ENCODE measurements at regions of chr21 and their contacts with region 1.

Region 1: DNA sequence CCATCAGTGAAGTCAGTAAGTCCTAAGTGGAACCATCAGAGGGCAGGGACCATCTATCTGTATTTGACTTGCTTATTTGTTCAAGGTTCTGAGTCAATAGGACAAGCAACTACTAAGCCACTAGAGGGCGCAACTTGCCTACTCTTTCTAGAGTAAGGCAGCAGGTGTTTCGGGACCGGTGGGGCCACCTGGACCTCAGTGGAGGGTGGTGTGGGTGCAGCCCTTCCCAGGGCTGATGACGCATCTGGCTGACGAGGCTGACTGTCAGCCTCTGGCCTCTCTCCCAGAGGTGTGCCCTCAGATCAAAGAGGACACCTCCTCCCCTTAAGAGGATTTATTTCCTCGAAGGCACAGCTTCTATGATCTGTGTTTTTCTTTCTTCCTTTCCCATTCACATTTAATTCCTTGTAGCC is 6.6 kb downstream of the CBR3 start:
- DNase-seq: peak; percentile 95
- H3K4me3 ChIP-seq: no peak overlapping the region
- H3K27ac ChIP-seq: peak overlapping the region; percentile 75 to 86 (median 81)
- H3K4me1 ChIP-seq: peaks cover 3 to 21% (median 9%) of the 10 kb centered on the region in 4 donors
- H3K27me3 ChIP-seq: no peaks in the 10 kb centered on the region
- CTCF ChIP-seq: peak; percentile 78 to 96 (median 88)
- EP300 ChIP-seq: no peak
- POLR2A ChIP-seq: peak; percentile 19

Region 2: GRCh38 chr21:35861661-35862060 is 279.9 kb before region 1 on chr21:
- in situ Hi-C with region 1: no loop called
- intact Hi-C with region 1: no loop called
- DNase-seq: no peak
- H3K4me3 ChIP-seq: no peak overlapping the region
- H3K27ac ChIP-seq: no peak overlapping the region
- H3K4me1 ChIP-seq: peaks cover 0 to 25% (median 14%) of the 10 kb centered on the region in 4 donors
- H3K27me3 ChIP-seq: no peaks in the 10 kb centered on the region
- CTCF ChIP-seq: no peak
- EP300 ChIP-seq: no peak
- POLR2A ChIP-seq: no peak

Region 3: DNA sequence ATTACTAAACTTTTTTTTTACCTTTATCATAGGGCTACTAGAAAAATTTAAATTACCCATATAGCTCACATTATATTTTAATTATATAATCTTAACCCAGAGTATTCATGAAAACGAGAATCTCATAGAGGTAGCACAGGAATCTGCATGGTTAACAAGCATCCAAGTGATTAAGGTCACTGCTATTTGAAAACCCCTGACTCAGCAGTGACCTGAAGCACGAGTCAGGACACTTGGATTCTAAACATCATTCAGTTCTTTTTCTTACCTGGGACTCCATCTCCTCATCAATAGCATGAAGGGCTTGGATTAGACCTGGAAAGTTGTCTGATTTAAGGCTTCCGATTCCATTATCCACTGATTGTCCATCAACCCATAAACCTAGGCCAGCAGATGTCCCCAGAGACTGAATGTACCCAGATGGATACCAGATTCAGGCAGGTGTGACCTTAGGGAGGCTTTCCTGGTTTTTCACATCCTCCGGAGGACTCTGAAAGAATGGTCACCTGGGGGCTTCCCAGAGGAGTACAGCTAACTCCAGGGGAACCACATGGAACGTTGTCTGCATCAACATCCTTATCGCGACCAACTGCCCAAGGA is 255.5 kb before region 1 on chr21:
- in situ Hi-C with region 1: no loop called
- intact Hi-C with region 1: no loop called
- DNase-seq: no peak
- H3K4me3 ChIP-seq: no peak overlapping the region
- H3K27ac ChIP-seq: no peak overlapping the region
- H3K4me1 ChIP-seq: no peaks in the 10 kb centered on the region
- H3K27me3 ChIP-seq: no peaks in the 10 kb centered on the region
- CTCF ChIP-seq: no peak
- EP300 ChIP-seq: no peak
- POLR2A ChIP-seq: no peak

Region 4: DNA sequence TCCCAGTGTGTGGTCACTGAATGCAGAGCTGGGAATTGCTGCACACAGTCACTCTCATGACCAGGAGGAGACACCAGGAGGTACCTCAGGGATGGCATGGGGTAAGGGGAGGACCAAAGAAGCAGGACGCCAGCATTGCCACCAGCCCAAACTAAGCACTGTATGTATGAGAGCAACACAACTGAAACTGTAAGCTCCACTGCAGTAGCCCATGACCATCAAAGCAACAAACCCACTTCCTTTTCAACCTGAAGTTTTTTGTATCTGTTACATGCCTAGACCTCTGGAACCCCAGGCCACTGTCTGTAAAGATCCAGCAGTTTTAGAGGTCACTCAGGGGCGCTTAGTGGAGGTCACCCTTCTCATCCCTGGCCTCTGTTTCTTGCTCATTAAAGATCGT is 245.5 kb before region 1 on chr21:
- in situ Hi-C with region 1: no loop called
- intact Hi-C with region 1: no loop called
- DNase-seq: no peak
- H3K4me3 ChIP-seq: no peak overlapping the region
- H3K27ac ChIP-seq: no peak overlapping the region
- H3K4me1 ChIP-seq: no peaks in the 10 kb centered on the region
- H3K27me3 ChIP-seq: no peaks in the 10 kb centered on the region
- CTCF ChIP-seq: no peak
- EP300 ChIP-seq: no peak
- POLR2A ChIP-seq: no peak

Region 5: DNA sequence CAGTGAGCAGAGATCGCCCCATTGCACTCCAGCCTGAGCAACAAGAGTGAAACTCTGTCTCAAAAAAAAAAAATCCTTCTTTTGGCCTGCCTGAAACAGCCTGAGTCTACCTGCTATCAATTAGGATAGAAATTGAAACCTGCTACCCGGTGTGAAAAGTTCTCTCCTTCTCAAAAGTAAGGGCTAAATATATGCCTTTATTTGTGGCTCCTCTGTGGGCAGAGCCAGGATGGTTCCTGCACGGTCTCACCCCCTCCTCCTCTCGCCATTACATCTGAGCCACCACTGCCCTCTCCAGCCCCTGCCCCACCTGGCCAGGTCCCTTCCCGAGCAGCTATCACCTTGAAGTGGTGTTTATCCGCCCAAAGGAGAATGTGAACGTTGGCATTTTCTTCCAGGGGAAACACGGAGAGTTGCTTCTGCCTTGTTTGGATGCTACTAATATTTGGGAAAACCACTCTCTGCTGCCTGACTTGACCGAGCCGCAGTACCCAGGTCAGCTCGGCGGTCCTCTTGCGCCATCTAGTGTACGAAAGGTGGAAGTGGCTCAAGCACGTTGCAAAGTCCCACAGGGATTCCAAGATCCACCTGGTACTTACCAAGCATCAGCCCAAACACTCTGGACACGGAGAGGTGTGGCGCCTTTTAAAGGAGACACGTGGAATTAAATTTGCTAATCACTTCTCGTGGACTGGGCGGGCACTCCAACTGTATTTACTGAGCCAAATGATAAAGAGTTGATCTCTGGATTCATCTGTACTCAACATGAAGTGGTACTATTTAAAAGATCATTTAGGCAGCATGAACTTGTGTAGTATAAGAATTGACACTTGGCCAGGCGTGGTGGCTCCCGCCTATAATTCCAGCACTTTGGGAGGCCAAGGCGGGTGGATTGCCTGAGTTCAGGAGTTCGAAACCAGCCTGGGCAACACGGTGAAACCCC is 113.1 kb before region 1 on chr21:
- in situ Hi-C with region 1: no loop called
- intact Hi-C with region 1: no loop called
- DNase-seq: peak; percentile 77
- H3K4me3 ChIP-seq: no peak overlapping the region
- H3K27ac ChIP-seq: no peak overlapping the region
- H3K4me1 ChIP-seq: peaks cover 0 to 3% (median 0%) of the 10 kb centered on the region in 4 donors
- H3K27me3 ChIP-seq: no peaks in the 10 kb centered on the region
- CTCF ChIP-seq: peak; percentile 82 to 96 (median 94)
- EP300 ChIP-seq: no peak
- POLR2A ChIP-seq: no peak

Region 6: DNA sequence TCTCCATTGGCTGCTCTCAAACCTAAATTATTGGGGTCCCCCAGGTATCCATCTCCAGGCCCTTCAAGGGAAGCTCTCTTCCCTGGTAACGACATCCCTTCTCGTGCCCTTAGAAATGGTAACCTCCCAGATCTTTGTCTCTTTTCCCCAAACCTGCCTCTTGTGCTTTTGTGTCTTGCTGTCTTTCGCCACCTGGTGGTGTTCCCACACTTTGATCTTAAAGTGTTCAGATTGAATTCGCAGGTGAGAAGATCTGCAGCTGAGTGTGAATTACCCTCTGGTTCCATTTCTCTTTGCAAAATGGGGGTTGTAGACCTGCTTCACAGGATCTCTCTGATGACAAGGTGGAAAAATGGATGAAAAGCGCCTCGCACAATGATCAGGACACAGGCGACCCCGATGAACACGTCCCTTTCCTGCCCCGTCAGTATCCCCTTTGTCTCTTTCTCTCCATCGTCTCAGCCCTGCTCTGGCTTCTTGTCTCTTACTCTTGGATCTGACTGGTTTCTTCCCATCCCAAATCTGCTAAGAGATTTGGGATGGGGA is 68.2 kb after region 1 on chr21:
- in situ Hi-C with region 1: loop called in 1 of 4 experiments (anchors 10 kb)
- intact Hi-C with region 1: no loop called
- DNase-seq: peak; percentile 67
- H3K4me3 ChIP-seq: no peak overlapping the region
- H3K27ac ChIP-seq: no peak overlapping the region
- H3K4me1 ChIP-seq: no peaks in the 10 kb centered on the region
- H3K27me3 ChIP-seq: no peaks in the 10 kb centered on the region
- CTCF ChIP-seq: peak; percentile 36 to 83 (median 56)
- EP300 ChIP-seq: no peak
- POLR2A ChIP-seq: no peak

Region 7: DNA sequence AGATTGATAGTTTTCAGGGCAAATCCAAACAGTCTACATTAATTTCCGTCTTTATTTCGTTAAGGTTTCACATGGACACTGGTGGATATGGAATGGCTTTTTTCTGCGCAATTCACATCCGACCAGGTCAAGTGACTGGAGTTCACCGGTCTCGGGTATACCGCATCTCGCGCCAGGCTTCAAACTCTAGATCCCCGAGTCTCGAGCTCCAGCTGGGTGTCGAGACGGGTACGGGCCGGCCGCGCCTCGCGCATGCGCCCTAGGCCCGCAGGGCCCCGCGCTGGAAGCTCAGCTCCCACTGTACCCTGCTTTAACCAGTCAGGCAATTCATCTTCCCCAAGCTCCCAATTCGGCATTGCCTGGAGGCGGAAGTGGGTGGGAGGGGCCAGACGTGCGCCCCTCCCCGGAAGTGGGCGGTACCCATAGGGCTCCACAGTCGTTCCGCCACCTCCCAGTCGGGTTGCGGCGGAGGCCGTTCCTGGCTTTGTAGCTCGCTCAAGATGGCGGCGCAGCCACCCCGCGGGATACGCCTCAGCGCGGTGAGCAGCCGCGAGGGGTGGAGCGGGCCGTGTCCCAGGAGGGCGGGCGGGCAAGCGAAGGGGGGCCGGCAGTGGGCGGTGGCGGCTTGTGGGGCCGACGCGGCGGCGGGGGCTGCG is 178.4 kb after region 1 on chr21 and contains the start of gene MORC3:
- in situ Hi-C with region 1: loop called in 2 of 4 experiments (anchors 25 kb)
- intact Hi-C with region 1: loop called (anchors 10 kb)
- DNase-seq: peak; percentile 98
- H3K4me3 ChIP-seq: peak within 1 kb of the TSS; percentile 90 to 93 (median 91)
- H3K27ac ChIP-seq: peak within 1 kb of the TSS; percentile 99 to 100 (median 99)
- H3K4me1 ChIP-seq: peaks cover 15 to 45% (median 29%) of the 10 kb centered on the region in 4 donors
- H3K27me3 ChIP-seq: no peaks in the 10 kb centered on the region
- CTCF ChIP-seq: no peak
- EP300 ChIP-seq: no peak
- POLR2A ChIP-seq: peak; percentile 88
- total RNA-seq, gene MORC3: 33.7 to 127 (median 56.8) TPM

Region 8: GRCh38 chr21:36330904-36331303 is 189.4 kb after region 1 on chr21:
- in situ Hi-C with region 1: loop called (anchors 5 to 25 kb)
- intact Hi-C with region 1: loop called (anchors 10 kb)
- DNase-seq: peak; percentile 63
- H3K4me3 ChIP-seq: no peak overlapping the region
- H3K27ac ChIP-seq: peak overlapping the region in 2 of 4 donors; percentile 1 to 5
- H3K4me1 ChIP-seq: peaks cover 8 to 53% (median 16%) of the 10 kb centered on the region in 4 donors
- H3K27me3 ChIP-seq: no peaks in the 10 kb centered on the region
- CTCF ChIP-seq: peak; percentile 68 to 81 (median 80)
- EP300 ChIP-seq: no peak
- POLR2A ChIP-seq: no peak

Measured in transverse colon (tissue), 4 donors.